Activated B cell treated with CpG ODN at 0.5 μM for 24 hours (primary cell): ENCODE measurements at regions of chr9 and their contacts with region 1.

Region 1: DNA sequence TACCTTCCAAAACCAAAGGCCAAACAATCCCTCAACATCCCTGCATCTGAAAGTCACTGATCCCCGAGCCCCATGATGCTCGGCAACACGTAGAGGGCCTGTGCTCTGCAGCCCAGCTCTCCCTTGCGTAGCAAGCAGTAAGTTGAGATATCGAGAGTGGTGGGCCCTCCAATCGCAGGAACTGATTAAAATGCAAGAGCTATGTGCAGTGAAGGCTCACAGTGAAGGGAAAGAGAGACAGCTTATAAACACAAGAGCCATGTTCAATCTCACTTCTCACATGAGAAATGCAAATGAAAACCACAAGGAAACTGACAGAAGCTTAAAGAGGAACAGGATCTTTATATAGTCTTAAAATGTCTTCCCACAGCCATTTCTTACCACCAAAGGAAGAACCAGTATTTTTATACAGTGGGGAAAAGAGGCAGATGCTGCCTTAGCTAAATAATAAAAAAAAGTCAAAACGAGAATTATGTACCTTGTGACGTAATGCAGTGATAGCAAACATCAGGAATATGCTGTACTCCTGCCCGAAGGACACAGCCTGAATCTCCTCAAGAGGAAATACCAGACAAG is 24.6 kb downstream of the TTF1 start:
- DNase-seq: peak; percentile 33
- ATAC-seq: peak; percentile 80
- H3K4me3 Mint-ChIP-seq: peak overlapping the region; percentile 80
- H3K27ac Mint-ChIP-seq: peak overlapping the region; percentile 99
- H3K4me1 Mint-ChIP-seq: peaks cover 76% of the 10 kb centered on the region
- H3K27me3 Mint-ChIP-seq: no peaks in the 10 kb centered on the region
- CTCF ChIP-seq: no peak

Region 2: DNA sequence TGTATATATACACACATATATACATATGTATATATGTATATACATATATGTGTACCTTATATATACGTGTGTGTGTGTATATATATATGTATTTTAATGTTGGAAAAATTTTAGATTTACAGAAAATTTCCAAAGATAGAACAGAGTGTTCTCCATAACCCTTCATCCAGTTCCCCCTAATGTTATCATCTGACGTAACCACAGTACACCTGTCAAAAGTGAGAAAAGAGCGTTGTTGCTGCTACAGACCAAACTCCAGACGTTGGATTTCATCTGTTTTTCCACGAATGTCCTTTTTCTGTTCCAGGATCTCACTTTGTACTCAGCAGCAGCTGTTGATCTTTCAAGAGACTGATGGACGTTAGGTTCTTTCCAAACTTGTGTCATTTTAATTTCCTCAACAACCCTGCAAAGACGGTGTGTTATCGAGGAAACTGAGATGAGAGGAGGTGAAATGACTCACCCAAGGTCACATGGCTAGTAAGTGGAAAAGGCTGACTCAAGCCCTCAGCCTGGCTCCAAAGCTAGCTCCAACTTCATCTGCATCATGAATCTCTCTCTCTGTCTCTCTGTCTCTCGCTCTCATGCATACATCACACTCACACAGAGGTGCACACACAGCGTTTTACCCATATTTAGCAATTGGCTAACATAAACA is 237.2 kb before region 1 on chr9:
- CTCF ChIA-PET with region 1: no interaction called
- POLR2A ChIA-PET with region 1: no interaction called
- intact Hi-C with region 1: no loop called
- DNase-seq: no peak
- ATAC-seq: no peak
- H3K4me3 Mint-ChIP-seq: no peak overlapping the region
- H3K27ac Mint-ChIP-seq: no peak overlapping the region
- H3K4me1 Mint-ChIP-seq: peaks cover 9% of the 10 kb centered on the region
- H3K27me3 Mint-ChIP-seq: peaks cover 63% of the 10 kb centered on the region
- CTCF ChIP-seq: no peak

Region 3: DNA sequence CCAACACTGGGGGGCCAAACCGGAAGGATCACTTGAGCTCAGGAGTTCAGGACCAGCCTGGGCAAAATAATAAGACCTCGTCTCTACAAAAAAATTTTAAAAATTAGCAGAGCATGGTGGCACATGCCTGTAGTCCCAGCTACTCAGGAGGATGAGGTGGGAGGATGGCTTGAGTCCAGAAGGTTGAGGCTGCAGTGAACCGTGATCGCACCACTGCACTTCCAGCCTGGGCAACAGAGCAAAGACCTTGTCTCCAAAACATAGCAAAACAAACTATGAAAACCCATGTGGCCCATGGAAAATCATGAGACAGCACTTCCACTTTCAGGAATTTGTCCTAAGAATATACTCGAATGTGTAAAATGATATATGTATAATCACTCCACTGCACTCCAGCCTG is 33.4 kb before region 1 on chr9:
- CTCF ChIA-PET with region 1: interaction called, 57 read pairs
- POLR2A ChIA-PET with region 1: interaction called, 527 read pairs
- intact Hi-C with region 1: loop called (anchors 1 kb)
- DNase-seq: no peak
- ATAC-seq: no peak
- H3K4me3 Mint-ChIP-seq: no peak overlapping the region
- H3K27ac Mint-ChIP-seq: peak overlapping the region; percentile 76
- H3K4me1 Mint-ChIP-seq: peaks cover 56% of the 10 kb centered on the region
- H3K27me3 Mint-ChIP-seq: no peaks in the 10 kb centered on the region
- CTCF ChIP-seq: no peak

Region 4: DNA sequence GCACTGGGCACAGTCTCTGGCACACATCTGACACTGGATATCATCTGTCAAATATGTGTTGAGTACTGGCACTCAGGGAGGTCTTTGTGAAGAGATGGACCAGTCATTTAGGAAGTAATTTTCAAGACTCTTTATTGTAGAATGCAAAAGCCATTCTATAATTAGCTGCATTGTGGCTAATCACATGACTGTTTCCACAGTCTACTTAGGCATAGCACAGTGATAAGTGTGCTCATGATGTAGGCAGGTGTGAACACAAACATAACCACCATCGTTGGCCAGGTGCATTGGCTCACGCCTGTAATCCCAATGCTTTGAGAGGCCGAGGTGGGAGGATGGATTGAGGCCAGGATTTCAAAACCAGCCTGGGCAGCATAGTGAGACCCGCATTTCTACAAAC is 90.1 kb after region 1 on chr9:
- CTCF ChIA-PET with region 1: no interaction called
- POLR2A ChIA-PET with region 1: no interaction called
- intact Hi-C with region 1: no loop called
- DNase-seq: no peak
- ATAC-seq: no peak
- H3K4me3 Mint-ChIP-seq: no peak overlapping the region
- H3K27ac Mint-ChIP-seq: no peak overlapping the region
- H3K4me1 Mint-ChIP-seq: peaks cover 5% of the 10 kb centered on the region
- H3K27me3 Mint-ChIP-seq: peaks cover 3% of the 10 kb centered on the region
- CTCF ChIP-seq: no peak

Region 5: DNA sequence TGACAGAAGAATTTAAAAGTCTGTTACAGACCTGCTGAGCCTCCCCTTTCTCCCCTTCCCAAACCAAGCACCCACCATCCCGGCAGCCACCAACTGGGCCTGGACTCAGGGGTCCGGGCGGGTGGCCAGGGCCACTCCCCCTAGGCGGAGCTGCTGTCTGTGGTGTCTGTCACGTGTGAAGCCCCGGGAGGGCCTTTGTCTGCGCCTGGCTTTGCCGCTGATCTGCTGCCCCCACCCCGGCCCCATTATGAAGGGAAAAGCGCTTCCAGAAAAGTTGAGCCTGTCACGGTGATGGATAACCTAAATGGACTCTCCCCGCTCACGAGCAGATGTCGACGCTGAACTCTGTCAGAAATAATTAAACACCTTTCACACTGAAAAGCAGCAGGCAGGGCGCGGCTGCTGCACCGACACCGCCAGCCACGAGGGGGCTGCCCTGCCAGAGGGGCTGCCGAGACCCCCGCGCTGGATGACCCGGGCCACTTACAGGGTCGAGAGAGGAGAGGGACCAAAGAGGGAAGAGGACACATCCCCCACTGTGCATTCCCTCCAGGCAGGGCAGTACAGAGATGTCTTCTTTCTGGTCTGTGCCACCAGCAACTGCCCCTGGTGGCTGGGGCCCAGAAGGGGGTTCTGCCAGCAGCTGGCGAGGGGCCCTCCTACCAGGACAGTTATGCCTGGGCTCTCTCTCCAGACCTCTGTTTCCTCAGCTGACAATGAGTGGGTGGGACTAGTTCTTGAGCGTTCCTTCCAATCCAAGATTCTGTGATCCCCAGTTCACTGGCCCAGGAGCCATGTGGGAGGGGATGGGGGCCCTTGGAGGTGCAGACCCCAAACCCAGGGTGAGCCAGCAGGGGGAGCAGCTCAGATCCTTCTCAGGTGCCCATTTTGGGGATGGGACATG is 164.3 kb after region 1 on chr9:
- CTCF ChIA-PET with region 1: no interaction called
- POLR2A ChIA-PET with region 1: no interaction called
- intact Hi-C with region 1: no loop called
- DNase-seq: no peak
- ATAC-seq: no peak
- H3K4me3 Mint-ChIP-seq: no peak overlapping the region
- H3K27ac Mint-ChIP-seq: no peak overlapping the region
- H3K4me1 Mint-ChIP-seq: peaks cover 3% of the 10 kb centered on the region
- H3K27me3 Mint-ChIP-seq: peaks cover 8% of the 10 kb centered on the region
- CTCF ChIP-seq: no peak